ENCODE measurements at regions of chr17 and their contacts with region 1.

Region 1: DNA sequence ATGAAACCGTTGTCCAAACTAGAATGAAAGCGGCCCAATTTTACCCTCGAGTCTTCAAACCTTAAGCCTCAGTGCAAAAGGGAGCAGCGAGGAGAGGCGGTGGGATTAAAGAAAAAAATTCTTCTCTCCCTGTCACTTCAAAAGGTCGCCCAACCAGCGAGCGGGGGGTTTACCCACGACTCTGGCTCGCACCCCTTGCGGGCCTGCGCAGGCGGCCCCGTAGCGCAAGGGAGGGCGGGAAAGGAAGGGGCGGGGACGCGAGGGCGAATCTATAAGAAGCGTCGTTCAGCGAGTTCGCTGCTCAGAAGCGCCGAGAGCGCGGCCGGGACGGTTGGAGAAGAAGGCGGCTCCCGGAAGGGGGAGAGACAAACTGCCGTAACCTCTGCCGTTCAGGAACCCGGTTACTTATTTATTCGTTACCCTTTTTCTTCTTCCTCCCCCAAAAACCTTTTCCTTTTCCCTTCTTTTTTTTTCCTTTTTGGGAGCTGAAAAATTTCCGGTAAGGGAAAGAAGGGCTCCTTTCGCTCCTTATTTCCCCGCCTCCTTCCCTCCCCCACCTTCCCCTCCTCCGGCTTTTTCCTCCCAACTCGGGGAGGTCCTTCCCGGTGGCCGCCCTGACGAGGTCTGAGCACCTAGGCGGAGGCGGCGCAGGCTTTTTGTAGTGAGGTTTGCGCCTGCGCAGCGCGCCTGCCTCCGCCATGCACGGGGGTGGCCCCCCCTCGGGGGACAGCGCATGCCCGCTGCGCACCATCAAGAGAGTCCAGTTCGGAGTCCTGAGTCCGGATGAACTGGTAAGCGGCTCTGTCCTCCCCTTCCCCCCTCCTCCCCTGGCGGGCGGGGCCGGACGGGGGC is at the start of gene POLR2A:
- DNase-seq: peak; percentile 93 to 98
- H3K4me3 ChIP-seq: peak within 1 kb of the TSS; percentile 79 to 92 (median 84)
- H3K27ac ChIP-seq: peak within 1 kb of the TSS; percentile 96
- H3K4me1 ChIP-seq: peaks cover 2 to 18% (median 13%) of the 10 kb centered on the region in 4 experiments
- H3K27me3 ChIP-seq: no peaks in the 10 kb centered on the region
- CTCF ChIP-seq: no peak
- EP300 ChIP-seq: peak in 1 of 2 experiments; percentile 95; a peak in 1 of 3 replicates
- POLR2A ChIP-seq: peak; percentile 100
- RAD21 ChIP-seq: no peak
- total RNA-seq, gene POLR2A: 150 and 157 TPM in 2 replicates

Region 2: DNA sequence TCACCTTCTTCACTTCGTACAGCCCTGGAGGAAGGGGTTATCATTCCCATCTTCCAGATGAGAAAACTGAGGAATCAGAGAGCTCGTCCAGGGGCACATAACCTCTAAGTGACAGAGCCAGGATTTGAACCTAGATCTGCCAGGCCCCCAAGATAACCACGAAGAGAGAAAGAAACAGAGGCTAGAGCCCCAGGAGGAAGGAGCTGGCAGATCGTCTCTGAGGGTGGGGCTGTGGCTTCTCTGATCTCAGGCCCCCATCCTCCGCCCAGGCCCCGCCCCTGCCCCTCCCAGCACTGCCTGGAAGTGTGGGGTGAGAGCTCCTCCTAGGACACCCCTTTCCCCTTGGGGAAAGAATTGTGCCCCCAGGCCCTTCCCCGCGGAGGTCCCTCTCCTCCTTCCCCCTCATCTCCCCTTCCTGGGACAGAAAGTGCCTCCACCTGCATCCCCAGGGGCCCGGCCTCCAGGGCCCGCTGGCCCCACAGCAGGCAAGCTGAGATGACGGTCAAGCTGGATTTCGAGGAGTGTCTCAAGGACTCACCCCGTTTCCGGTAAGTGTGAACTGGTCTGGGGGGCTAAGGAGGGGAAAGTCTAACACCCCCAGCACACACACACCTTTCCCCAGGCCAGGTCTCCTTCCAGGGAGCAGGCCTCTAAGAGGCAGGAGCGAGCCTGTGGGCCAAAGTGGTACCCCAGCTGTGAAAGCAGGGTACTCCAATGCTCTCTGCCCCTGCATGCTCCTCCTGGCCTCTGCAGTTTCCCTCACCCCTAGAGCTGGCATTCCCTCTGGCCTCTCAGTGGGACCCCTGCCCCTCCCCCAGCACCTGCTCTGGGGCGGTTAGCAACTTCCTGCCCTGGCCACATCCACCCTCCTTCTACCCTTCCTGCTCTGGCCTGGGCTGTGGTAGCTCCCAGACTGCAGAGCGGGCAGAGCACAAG is 147.8 kb before region 1 on chr17 and contains the start of gene ACAP1:
- CTCF ChIA-PET with region 1: no interaction called
- POLR2A ChIA-PET with region 1: interaction called, 13 read pairs
- DNase-seq: peak; percentile 44 to 79
- H3K4me3 ChIP-seq: peak within 1 kb of the TSS in 3 of 4 experiments; percentile 10 to 52 (median 32); a peak in 6 of 8 replicates
- H3K27ac ChIP-seq: peak within 1 kb of the TSS; percentile 51; the same call in 1 of the 2 replicates
- H3K4me1 ChIP-seq: peaks cover 3 to 16% (median 14%) of the 10 kb centered on the region in 4 experiments
- H3K27me3 ChIP-seq: no peaks in the 10 kb centered on the region
- CTCF ChIP-seq: no peak
- EP300 ChIP-seq: peak in 1 of 2 experiments; percentile 52; a peak in 1 of 3 replicates
- POLR2A ChIP-seq: peak in 1 of 2 experiments; percentile 32; a peak in 2 of 3 replicates
- RAD21 ChIP-seq: peak in 1 of 2 experiments; percentile 16; a peak in 1 of 4 replicates
- total RNA-seq, gene ACAP1: 45.1 and 49.2 TPM in 2 replicates

Region 3: DNA sequence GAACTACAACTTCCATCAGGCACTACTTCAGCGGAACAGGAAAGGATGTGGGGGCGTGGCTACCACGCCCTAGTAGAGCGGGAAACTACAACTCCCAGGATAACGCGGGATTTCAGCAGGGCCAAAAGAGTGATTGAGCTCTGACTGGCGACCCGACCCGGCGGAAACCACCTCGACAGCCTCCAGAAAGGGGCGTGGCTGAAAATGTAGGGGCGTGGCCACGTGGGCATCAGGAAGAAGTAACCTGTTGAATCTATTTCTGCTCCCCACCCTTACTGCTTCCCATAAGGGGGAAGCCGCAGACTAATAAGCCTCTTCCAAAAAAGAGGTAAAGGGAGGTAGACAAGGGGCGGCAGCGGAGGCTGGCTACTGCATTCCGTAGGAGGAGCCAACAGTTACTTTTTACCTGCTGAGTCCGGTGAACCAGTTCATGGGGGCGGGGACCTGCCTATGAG is 49.0 kb before region 1 on chr17 and contains the start of gene TMEM102:
- CTCF ChIA-PET with region 1: interaction called, 9 read pairs
- POLR2A ChIA-PET with region 1: interaction called, 339 read pairs
- DNase-seq: peak; percentile 96 to 99
- H3K4me3 ChIP-seq: peak within 1 kb of the TSS; percentile 50 to 83 (median 67)
- H3K27ac ChIP-seq: peak within 1 kb of the TSS; percentile 59
- H3K4me1 ChIP-seq: peaks cover 0 to 22% (median 8%) of the 10 kb centered on the region in 4 experiments; a peak in 6 of 7 replicates
- H3K27me3 ChIP-seq: peaks cover 2 to 19% (median 12%) of the 10 kb centered on the region in 4 experiments; a peak in 6 of 7 replicates
- CTCF ChIP-seq: no peak
- EP300 ChIP-seq: no peak
- POLR2A ChIP-seq: 0 out of 3 replicates have a peak, but pooled peaks of 1 of the 2 experiments have one; percentile 21
- RAD21 ChIP-seq: no peak
- total RNA-seq, gene TMEM102: 11.2 and 12.2 TPM in 2 replicates

Region 4: GRCh38 chr17:7454980-7455379 is 29.3 kb before region 1 on chr17:
- CTCF ChIA-PET with region 1: no interaction called
- POLR2A ChIA-PET with region 1: interaction called, 200 read pairs
- DNase-seq: no peak
- H3K4me3 ChIP-seq: peak overlapping the region in 2 of 4 experiments; percentile 78 to 87; a peak in 4 of 8 replicates
- H3K27ac ChIP-seq: no peak overlapping the region
- H3K4me1 ChIP-seq: peaks cover 0 to 8% (median 0%) of the 10 kb centered on the region in 4 experiments; a peak in 2 of 7 replicates
- H3K27me3 ChIP-seq: no peaks in the 10 kb centered on the region; a peak in 1 of 7 replicates
- CTCF ChIP-seq: no peak
- EP300 ChIP-seq: no peak
- POLR2A ChIP-seq: no peak
- RAD21 ChIP-seq: no peak

Region 5: GRCh38 chr17:7496470-7497183 is 12.3 kb after region 1 on chr17:
- CTCF ChIA-PET with region 1: no interaction called
- POLR2A ChIA-PET with region 1: interaction called, 58 read pairs
- DNase-seq: no peak
- H3K4me3 ChIP-seq: no peak overlapping the region
- H3K27ac ChIP-seq: no peak overlapping the region
- H3K4me1 ChIP-seq: no peaks in the 10 kb centered on the region
- H3K27me3 ChIP-seq: no peaks in the 10 kb centered on the region
- CTCF ChIP-seq: no peak
- EP300 ChIP-seq: no peak
- POLR2A ChIP-seq: no peak
- RAD21 ChIP-seq: no peak

Region 6: GRCh38 chr17:7509937-7510336 is 25.6 kb after region 1 on chr17:
- CTCF ChIA-PET with region 1: interaction called, 7 read pairs
- POLR2A ChIA-PET with region 1: interaction called, 24 read pairs
- DNase-seq: no peak
- H3K4me3 ChIP-seq: no peak overlapping the region
- H3K27ac ChIP-seq: no peak overlapping the region
- H3K4me1 ChIP-seq: no peaks in the 10 kb centered on the region
- H3K27me3 ChIP-seq: no peaks in the 10 kb centered on the region
- CTCF ChIP-seq: no peak
- EP300 ChIP-seq: no peak
- POLR2A ChIP-seq: no peak
- RAD21 ChIP-seq: no peak

Region 7: GRCh38 chr17:7572588-7573323 is 88.5 kb after region 1 on chr17:
- CTCF ChIA-PET with region 1: no interaction called
- POLR2A ChIA-PET with region 1: interaction called, 32 read pairs
- DNase-seq: peak; percentile 100
- H3K4me3 ChIP-seq: peak overlapping the region; percentile 97 to 99 (median 98)
- H3K27ac ChIP-seq: peak overlapping the region; percentile 99
- H3K4me1 ChIP-seq: peaks cover 4 to 10% (median 7%) of the 10 kb centered on the region in 4 experiments
- H3K27me3 ChIP-seq: no peaks in the 10 kb centered on the region
- CTCF ChIP-seq: no peak
- EP300 ChIP-seq: no peak
- POLR2A ChIP-seq: peak; percentile 96 to 98
- RAD21 ChIP-seq: no peak

Measured in H1 (cell line).